Heart right ventricle (tissue), 16 donors: ENCODE measurements at regions of chr1 and their contacts with region 1.

Region 1: GRCh38 chr1:156927215-156928042 is 7.0 kb downstream of the LRRC71 start:
- DNase-seq: peak; percentile 60 to 76
- ATAC-seq: peak; percentile 53 to 77 (median 70)
- H3K4me3 ChIP-seq: peak overlapping the region in 9 of 10 donors; percentile 14 to 48 (median 37)
- H3K27ac ChIP-seq: no peak overlapping the region
- H3K4me1 ChIP-seq: peaks cover 10 to 38% (median 32%) of the 10 kb centered on the region in 9 donors
- H3K27me3 ChIP-seq: peaks cover 23 to 78% (median 67%) of the 10 kb centered on the region in 7 donors
- CTCF ChIP-seq: peak; percentile 29 to 81 (median 63)

Region 2: DNA sequence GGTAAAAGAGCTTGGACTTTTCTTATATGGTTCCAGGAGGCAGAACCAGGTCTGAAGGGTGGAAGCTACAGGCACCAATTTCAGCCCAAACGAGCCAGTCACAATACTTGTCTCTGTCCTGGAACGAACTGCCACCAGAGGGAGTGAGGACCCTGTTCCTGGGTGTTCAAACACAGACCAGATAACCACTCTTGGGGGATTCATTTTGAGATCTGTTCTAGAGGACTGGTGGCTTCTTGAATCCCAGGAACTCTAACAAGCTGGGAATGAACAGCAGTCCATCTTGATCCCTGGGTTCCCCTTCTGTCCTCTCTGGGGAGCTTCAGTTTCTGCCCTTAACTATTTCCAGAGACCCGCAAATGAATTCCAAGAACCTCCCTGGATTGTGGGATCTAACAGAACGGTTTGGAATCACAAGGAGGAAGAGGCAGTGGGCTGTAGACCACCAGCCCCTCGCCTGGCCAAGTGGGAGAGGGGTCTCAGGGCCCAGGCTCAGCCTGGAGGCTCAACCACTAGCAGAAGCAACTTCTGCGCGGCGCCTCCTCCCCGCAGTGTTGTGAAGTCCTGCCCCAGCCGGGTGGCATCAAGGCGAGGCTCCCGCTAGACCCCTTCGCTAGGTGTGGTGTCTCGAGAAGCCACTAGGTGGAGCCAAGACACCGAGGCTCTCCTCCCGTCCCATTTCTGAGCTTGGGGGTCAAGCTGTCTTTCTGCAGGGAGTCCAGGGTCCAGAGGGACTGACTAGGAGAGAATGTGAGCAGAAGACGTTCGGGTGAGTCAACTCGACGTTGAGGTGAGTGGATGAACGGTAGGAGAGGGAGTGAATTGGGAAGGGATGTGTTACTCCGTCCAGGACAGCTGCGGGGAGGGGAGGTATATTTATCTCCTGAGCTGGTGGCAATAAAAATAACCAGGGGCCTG is 238.1 kb before region 1 on chr1:
- intact Hi-C with region 1: loop called in 2 of 10 experiments (anchors 10 kb)
- DNase-seq: peak; percentile 71 to 74
- ATAC-seq: peak; percentile 82 to 94 (median 91)
- H3K4me3 ChIP-seq: peak overlapping the region in 4 of 10 donors; percentile 1 to 36 (median 17)
- H3K27ac ChIP-seq: no peak overlapping the region
- H3K4me1 ChIP-seq: peaks cover 0 to 26% (median 17%) of the 10 kb centered on the region in 9 donors
- H3K27me3 ChIP-seq: peaks cover 0 to 90% (median 52%) of the 10 kb centered on the region in 7 donors
- CTCF ChIP-seq: peak; percentile 87 to 96 (median 93)

Region 3: GRCh38 chr1:156833603-156834002 is 93.8 kb before region 1 on chr1:
- intact Hi-C with region 1: loop called in 3 of 10 experiments (anchors 5 to 10 kb)
- DNase-seq: no peak
- ATAC-seq: peak in 3 of 8 donors; percentile 47 to 58 (median 49)
- H3K4me3 ChIP-seq: no peak overlapping the region
- H3K27ac ChIP-seq: no peak overlapping the region
- H3K4me1 ChIP-seq: no peaks in the 10 kb centered on the region
- H3K27me3 ChIP-seq: peaks cover 0 to 28% (median 7%) of the 10 kb centered on the region in 7 donors
- CTCF ChIP-seq: no peak

Region 4: DNA sequence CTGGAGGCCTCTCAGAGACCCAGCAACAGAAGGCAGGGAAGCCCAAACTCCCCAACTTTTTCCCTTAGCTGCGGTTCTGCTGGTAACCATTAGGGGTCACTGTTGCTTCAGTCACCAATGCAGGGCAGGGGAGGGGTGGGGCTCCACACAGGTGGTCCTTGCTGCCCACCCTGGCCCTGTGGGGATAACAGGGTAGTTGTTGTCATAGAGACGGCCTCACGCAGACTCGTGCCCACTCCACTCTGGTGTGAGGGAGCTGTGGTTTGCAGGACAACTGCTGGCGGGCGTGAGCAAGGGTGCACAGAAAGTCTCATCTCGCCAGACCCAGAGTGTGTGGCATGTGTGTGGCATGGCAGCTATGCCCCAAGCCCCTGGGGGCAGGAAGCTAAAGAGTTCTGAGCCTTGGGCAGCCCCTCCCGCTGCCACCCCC is 88.4 kb before region 1 on chr1:
- intact Hi-C with region 1: loop called in 5 of 10 experiments (anchors 5 to 10 kb)
- DNase-seq: no peak
- ATAC-seq: peak; percentile 28 to 67 (median 49)
- H3K4me3 ChIP-seq: no peak overlapping the region
- H3K27ac ChIP-seq: no peak overlapping the region
- H3K4me1 ChIP-seq: peaks cover 0 to 5% (median 0%) of the 10 kb centered on the region in 9 donors
- H3K27me3 ChIP-seq: peaks cover 0 to 67% (median 45%) of the 10 kb centered on the region in 7 donors
- CTCF ChIP-seq: peak; percentile 68 to 90 (median 84)

Region 5: DNA sequence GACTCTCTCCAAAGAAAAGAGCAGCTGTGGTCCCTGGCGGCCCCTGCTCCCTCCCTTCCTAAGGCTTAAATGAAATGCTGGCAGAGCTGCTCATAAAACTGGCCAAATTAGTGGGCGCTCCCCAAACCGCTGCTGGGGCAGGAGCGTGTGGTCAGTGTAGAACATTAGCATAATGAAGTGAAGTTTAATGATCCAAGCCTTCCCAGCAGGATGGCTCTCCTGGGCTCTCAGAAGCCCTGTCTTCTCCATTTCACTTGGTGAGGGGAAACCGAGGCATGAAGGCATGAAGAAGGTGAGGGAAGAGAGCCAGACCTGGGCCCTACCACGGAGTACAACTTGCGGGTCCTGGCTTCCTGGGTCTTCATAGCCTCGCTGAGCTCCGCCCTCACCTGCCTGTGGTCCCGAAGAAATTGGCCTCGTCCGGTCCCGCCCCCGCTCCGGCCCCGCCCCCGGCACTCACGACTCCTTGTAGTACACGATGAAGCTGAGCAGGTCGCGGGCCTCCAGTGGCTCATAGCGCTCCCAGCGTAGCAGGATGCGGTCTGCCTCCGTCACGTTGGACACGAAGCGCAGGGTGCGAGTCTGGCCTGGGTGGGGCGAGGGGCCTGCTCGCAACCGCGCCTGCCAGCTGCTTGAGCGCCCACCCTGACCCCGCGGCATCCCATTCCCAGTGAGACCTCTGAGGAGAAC is 78.8 kb before region 1 on chr1:
- intact Hi-C with region 1: loop called in 2 of 10 experiments (anchors 5 to 10 kb)
- DNase-seq: peak in 1 of 2 donors; percentile 37
- ATAC-seq: no peak
- H3K4me3 ChIP-seq: no peak overlapping the region
- H3K27ac ChIP-seq: no peak overlapping the region
- H3K4me1 ChIP-seq: peaks cover 0 to 30% (median 15%) of the 10 kb centered on the region in 9 donors
- H3K27me3 ChIP-seq: peaks cover 3 to 69% (median 58%) of the 10 kb centered on the region in 7 donors
- CTCF ChIP-seq: no peak